Right ventricle myocardium superior (tissue), 1 donor: ENCODE measurements at regions of chr7 and their contacts with region 1.

Region 1: DNA sequence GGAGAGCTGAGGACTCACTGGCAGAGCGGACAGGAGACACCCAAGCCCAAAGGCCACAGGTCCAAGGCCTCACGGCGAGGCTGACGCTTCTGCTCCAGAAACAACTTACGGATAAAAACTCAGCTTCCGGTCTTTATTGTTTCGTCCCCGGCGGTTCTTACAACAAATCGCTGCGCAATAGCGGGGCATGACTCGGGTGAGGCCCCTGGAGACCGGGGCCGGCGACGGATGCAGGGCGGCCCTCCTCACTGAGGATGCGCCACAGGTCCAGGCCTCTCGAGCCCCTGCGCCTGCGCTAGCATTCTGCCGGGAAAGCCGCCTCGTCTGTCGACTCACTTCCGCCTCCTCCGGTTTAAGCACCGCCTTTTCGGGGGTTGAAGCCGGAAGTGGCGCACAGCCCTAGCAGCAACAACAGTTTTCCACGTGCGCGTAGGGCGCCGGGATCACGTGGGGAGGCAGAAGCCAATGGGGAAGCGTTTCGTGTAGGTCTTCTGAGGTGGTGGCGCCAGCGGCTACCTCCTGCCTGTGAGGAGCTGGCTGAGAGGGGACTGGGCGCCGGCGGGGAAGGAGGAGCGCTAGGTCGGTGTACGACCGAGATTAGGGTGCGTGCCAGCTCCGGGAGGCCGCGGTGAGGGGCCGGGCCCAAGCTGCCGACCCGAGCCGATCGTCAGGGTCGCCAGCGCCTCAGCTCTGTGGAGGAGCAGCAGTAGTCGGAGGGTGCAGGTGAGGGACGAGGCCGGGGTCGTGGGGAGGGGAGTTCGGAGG is at the starts of genes DNAJB9 and THAP5:
- DNase-seq: peak; percentile 99
- ATAC-seq: peak; percentile 98
- total RNA-seq, gene DNAJB9: 31.3 TPM
- total RNA-seq, gene THAP5: 21.1 TPM

Region 2: GRCh38 chr7:108525985-108526767 is 43.4 kb before region 1 on chr7 and contains the start of gene PNPLA8:
- intact Hi-C with region 1: loop called (anchors 5 kb)
- DNase-seq: peak; percentile 100
- ATAC-seq: peak; percentile 97
- total RNA-seq, gene PNPLA8: 29.0 TPM